Activated naive CD8-positive, alpha-beta T cell treated with anti-CD3 and anti-CD28 coated beads, Interleukin-2, amount 10 ng/mL, durations not matched to agents 7 days and 5 days (primary cell): ENCODE measurements at regions of chr6 and their contacts with region 1.

Region 1: DNA sequence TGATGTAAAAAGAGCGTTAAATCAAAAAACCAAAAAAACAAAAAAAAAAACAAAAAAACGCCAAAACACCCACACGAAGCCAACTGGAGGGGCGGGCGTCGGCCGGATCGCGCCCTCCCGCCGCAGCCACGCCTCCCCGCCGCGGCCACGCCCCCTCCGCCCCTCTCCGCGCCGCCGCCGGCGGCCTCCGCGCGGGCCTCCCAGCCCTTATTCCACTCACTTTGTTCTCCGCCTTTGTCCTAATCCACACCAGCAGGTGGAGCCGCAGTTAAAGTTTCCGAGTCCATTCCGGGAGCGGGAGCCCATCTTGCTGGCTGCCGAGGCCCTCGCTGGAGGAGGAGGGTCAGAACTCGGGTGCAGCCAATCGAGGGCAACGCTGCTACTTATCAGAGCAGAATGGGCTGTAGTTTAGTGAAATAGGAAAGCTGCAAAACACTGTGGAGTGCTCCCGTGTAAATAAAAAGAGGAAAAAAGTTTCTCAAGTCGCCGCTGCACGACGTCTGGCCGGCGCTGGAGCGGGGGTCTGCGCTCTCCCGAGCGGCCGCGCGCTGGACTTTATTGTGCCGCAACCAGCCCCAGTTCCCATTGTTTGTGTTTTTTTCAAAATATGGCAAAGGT is at the start of gene ASF1A:
- DNase-seq: peak; percentile 98
- ATAC-seq: peak; percentile 86
- H3K4me3 Mint-ChIP-seq: peak within 1 kb of the TSS; percentile 88
- H3K27ac Mint-ChIP-seq: peak within 1 kb of the TSS; percentile 94
- H3K4me1 Mint-ChIP-seq: peaks cover 39% of the 10 kb centered on the region
- H3K27me3 Mint-ChIP-seq: no peaks in the 10 kb centered on the region
- total RNA-seq, gene ASF1A: 64.6 to 66.8 TPM

Region 2: DNA sequence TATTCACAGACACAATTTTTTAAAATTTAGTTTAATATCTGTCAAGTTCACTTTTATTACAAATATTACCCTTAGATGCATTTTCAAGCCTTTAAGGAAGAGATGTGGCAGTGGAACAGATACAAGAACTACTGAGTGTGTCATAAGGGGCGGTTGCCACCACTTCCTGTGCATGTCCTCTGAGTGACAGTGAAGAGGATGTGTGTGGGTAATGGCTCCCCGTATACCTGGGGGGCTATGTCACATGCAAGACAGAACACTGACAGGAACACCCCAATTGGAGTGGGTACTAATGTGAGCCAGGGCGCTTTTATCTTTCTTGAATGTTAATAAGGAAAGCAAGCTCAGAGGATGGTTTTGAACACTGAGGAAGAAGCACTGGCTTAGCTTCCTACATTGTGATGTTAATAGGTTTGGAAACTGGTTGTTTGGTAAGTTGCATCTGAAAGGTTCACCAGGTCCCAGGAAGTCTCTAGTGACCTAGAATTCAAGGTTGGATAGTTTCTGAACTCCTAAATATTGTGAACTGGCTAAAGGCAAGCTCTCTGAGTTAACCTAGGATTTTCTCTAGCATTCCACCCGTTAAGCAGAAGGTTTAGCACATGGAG is 83.4 kb before region 1 on chr6:
- POLR2A ChIA-PET with region 1: interaction called, 33 read pairs
- DNase-seq: peak; percentile 61
- ATAC-seq: peak; percentile 99
- H3K4me3 Mint-ChIP-seq: peak overlapping the region; percentile 76
- H3K27ac Mint-ChIP-seq: peak overlapping the region; percentile 88
- H3K4me1 Mint-ChIP-seq: peaks cover 49% of the 10 kb centered on the region
- H3K27me3 Mint-ChIP-seq: no peaks in the 10 kb centered on the region

Region 3: GRCh38 chr6:118934461-118935330 is 40.8 kb after region 1 on chr6 and contains the start of gene MCM9:
- POLR2A ChIA-PET with region 1: interaction called, 27 read pairs
- DNase-seq: peak; percentile 95
- ATAC-seq: peak; percentile 96
- H3K4me3 Mint-ChIP-seq: peak within 1 kb of the TSS; percentile 89
- H3K27ac Mint-ChIP-seq: peak within 1 kb of the TSS; percentile 89
- H3K4me1 Mint-ChIP-seq: peaks cover 24% of the 10 kb centered on the region
- H3K27me3 Mint-ChIP-seq: no peaks in the 10 kb centered on the region
- total RNA-seq, gene MCM9: 22.8 to 25.1 TPM